ENCODE measurements at regions of chr5 and their contacts with region 1.

Region 1: GRCh38 chr5:138874771-138875551 is at the start of gene LRRTM2:
- DNase-seq: peak in 9 of 10 donors; percentile 36 to 91 (median 69)

Region 2: GRCh38 chr5:138762110-138762509 is 112.9 kb before region 1 on chr5:
- intact Hi-C with region 1: no loop called
- DNase-seq: peak in 1 of 10 donors; percentile 19

Region 3: DNA sequence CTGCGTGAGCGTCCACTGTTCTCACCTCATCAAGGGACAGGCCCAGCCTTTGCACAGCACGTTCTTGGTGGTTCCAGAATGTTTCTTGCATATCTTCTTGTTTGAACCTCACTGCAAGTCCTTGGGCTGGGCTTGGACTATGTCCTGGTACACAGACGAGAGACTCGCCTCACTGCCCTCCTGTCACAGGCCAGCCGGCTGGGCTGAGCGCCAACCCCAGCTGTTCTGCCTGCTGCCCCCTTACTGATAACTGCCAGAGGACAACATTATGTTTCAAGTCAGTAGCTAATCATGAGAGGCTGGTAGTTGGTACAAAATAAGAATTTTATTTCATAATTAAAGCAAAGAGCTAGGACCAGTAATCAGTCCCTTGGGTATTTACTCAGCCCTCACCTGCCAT is 53.0 kb after region 1 on chr5:
- intact Hi-C with region 1: loop called (anchors 10 kb)
- DNase-seq: peak; percentile 73 to 98 (median 86)

Region 4: DNA sequence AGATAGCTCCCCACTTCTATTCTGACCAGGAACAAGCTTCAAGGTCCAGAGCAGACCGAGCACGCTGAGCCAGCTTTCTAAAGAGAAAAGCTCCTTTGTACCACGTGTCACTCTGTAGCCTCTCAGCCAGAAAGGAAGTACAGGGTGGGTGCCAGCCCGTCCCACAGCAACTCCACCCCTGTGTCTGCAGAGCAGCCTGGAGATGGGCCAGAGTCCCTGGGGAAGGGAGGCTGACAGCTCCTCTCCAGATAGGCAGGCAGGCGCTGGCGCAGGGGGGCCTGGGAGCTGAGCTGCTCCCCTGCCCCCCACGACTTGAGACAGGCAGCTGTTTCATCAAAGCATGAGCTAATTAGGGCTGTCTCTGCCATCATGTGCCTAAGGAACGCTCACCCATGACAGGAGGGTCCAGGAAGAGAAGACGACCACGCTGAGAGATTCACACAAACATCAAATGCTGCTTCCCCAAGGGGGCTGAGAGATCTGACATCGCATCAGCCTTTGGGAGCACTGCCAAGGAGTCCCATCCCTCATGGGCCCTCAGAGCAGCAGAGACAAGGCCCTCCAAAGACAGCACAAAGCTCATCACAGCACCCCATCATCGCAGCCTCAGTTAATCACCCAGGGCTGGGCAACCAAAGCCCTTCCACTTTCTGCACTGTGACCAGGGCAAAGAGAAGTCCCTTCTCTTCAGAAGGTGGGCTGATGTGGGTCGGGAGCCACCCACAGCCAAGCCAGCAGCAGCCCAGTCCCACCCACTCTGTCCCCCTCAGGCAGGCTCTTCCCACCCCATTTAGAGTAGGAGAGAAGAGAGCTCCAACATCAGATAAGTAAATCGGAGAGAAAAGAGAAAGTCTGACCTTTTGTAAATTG is 78.7 kb after region 1 on chr5:
- intact Hi-C with region 1: loop called (anchors 5 kb)
- DNase-seq: peak; percentile 80 to 99 (median 92)

Region 5: GRCh38 chr5:138981586-138981985 is 106.6 kb after region 1 on chr5:
- intact Hi-C with region 1: no loop called
- DNase-seq: peak in 3 of 10 donors; percentile 25 to 87 (median 52)

Region 6: GRCh38 chr5:139004374-139005307 is 129.7 kb after region 1 on chr5:
- intact Hi-C with region 1: no loop called
- DNase-seq: no peak

Region 7: DNA sequence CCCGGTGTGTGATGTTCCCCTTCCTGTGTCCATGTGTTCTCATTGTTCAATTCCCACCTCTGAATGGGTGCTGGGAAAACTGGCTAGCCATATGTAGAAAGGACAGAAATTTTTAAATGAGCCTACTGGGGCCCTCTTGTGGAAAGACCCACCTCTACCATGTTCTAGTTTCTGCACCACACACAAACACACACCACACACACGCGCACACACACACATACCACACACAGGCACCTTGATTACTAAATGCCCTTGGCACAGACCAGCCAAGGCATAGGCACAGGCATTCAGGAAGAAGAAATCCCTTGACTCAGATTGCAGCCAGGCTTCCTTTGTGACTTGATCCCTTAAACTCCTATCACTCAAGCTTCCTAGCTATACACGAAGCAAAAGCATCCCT is 262.7 kb after region 1 on chr5:
- intact Hi-C with region 1: loop called (anchors 5 kb)
- DNase-seq: no peak

Region 8: GRCh38 chr5:139197710-139198669 is 323.0 kb after region 1 on chr5 and contains the start of gene SIL1:
- intact Hi-C with region 1: loop called (anchors 5 kb)
- DNase-seq: peak; percentile 91 to 99 (median 96)